Esophagus squamous epithelium (tissue), 5 donors: ENCODE measurements at regions of chr12 and their contacts with region 1.

Region 1: DNA sequence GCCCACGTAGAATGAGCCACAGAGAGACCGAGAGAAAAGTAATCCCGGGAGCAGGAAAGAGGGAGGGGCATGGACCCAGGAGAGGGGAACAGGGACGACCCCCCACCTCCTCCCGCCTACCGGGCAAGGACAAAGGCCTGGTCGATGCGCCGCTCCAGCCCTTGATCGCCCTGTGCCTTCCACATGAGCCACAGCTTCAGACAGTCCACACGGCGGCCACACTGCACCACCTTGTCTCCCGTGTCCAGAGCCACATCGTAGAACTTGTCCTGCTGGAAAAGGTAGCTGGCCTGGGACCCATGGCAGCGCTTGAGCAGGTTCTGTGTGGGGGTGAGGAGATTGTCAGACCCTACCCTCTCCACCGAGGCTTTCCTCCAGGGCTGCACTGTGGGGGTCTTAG is 20.5 kb upstream of the ZNF740 start:
- DNase-seq: no peak
- H3K4me3 ChIP-seq: no peak overlapping the region
- H3K27ac ChIP-seq: no peak overlapping the region
- H3K4me1 ChIP-seq: peaks cover 0 to 8% (median 0%) of the 10 kb centered on the region in 3 donors
- H3K27me3 ChIP-seq: no peaks in the 10 kb centered on the region
- CTCF ChIP-seq: no peak
- POLR2A ChIP-seq: no peak

Region 2: DNA sequence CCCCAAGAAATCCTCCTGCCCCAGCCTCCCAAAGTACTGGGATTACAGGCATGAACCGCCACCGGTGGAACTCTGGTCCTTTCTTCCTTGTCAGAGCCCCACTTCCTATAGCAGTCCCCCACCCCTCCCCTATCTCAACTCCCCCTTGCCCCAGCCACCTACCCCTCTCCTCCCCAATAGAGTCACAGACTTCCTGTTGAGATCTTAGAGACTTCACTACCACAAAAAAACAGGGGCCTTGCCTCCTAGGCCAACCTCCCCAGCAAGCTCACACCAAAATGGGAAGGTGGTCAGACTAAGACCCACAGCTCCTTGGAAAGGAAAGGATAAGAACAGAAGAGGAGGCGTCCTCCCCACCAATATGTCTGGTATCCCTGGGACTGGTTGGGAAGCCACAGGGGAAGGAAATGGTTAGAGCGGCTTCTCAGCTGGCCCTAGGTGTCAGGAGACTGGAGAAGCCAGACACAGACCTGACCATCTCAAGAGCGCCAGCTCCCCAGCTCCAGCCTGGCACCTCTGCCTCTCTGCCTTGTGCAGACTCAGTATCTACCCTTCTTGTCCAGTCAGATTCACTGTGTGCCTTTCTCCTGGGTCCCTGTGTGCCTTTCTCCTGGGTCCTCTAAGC is 38.6 kb after region 1 on chr12:
- intact Hi-C with region 1: loop called (anchors 5 kb)
- DNase-seq: no peak
- H3K4me3 ChIP-seq: no peak overlapping the region
- H3K27ac ChIP-seq: no peak overlapping the region
- H3K4me1 ChIP-seq: peaks cover 4 to 44% (median 11%) of the 10 kb centered on the region in 3 donors
- H3K27me3 ChIP-seq: no peaks in the 10 kb centered on the region
- CTCF ChIP-seq: no peak
- POLR2A ChIP-seq: no peak